Left colon (tissue), 2 donors: ENCODE measurements at regions of chr2 and their contacts with region 1.

Region 1: GRCh38 chr2:190088917-190089316 is 26.4 kb upstream of the MSTN start:
- DNase-seq: peak in 1 of 2 donors; percentile 55
- ATAC-seq: peak; percentile 83

Region 2: DNA sequence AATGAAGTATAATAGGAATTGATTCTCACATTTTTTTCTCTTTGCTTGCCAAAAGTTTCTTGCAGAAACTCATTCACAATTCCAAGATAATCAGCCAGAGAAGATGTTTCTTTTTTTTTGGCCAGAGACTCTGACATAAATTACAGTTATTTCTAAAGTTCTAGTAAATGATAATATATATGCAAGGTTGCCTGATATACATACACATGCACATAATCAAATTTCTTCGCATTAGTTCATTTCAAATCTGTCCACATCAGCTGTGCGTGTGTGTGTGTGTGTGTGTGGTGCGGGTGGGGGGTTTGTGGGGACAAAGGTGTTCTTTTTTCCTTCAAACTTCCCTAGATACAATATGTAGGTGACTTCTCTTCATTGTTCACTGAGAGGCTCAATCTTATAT is 359.5 kb before region 1 on chr2:
- intact Hi-C with region 1: no loop called
- DNase-seq: no peak
- ATAC-seq: no peak

Region 3: GRCh38 chr2:190277234-190278112 is 188.6 kb after region 1 on chr2:
- intact Hi-C with region 1: loop called in 1 of 2 experiments (anchors 10 kb)
- DNase-seq: no peak
- ATAC-seq: peak; percentile 71

Region 4: GRCh38 chr2:190382851-190383250 is 293.9 kb after region 1 on chr2:
- intact Hi-C with region 1: loop called in 1 of 2 experiments (anchors 10 kb)
- DNase-seq: no peak
- ATAC-seq: peak; percentile 95

Region 5: DNA sequence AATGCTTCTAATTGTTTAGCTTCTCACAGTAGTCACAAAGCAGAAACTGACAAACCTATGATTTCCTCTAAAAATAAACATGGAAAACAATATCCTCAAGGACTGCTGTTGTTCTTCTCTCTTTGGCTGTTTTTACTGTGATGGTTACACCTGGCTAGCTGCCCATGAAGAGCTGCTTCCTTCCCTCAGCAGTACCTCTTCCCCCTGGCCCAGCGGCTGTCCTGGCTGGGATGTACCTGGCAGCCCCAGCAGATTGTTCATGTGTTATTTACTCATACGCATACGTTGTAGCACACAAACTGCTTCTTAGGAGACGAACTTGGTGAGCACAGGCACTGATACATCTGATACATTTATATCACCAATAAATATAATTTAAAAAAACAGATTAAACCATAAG is 418.2 kb after region 1 on chr2:
- intact Hi-C with region 1: loop called in 1 of 2 experiments (anchors 10 kb)
- DNase-seq: peak; percentile 59 to 67
- ATAC-seq: peak; percentile 38